ENCODE measurements at regions of chr1 and their contacts with region 1.

Region 1: GRCh38 chr1:12448746-12449177 is 169.2 kb downstream of the DHRS3 start:
- DNase-seq: no peak
- ATAC-seq: no peak
- H3K4me3 Mint-ChIP-seq: no peak overlapping the region
- H3K27ac Mint-ChIP-seq: no peak overlapping the region
- H3K4me1 Mint-ChIP-seq: peaks cover 18% of the 10 kb centered on the region
- H3K27me3 Mint-ChIP-seq: no peaks in the 10 kb centered on the region
- CTCF ChIP-seq: no peak

Region 2: GRCh38 chr1:12434174-12434573 is 14.6 kb before region 1 on chr1:
- CTCF ChIA-PET with region 1: no interaction called
- POLR2A ChIA-PET with region 1: no interaction called
- intact Hi-C with region 1: loop called (anchors 2 kb)
- DNase-seq: no peak
- ATAC-seq: no peak
- H3K4me3 Mint-ChIP-seq: no peak overlapping the region
- H3K27ac Mint-ChIP-seq: peak overlapping the region; percentile 56
- H3K4me1 Mint-ChIP-seq: peaks cover 56% of the 10 kb centered on the region
- H3K27me3 Mint-ChIP-seq: no peaks in the 10 kb centered on the region
- CTCF ChIP-seq: no peak

Region 3: DNA sequence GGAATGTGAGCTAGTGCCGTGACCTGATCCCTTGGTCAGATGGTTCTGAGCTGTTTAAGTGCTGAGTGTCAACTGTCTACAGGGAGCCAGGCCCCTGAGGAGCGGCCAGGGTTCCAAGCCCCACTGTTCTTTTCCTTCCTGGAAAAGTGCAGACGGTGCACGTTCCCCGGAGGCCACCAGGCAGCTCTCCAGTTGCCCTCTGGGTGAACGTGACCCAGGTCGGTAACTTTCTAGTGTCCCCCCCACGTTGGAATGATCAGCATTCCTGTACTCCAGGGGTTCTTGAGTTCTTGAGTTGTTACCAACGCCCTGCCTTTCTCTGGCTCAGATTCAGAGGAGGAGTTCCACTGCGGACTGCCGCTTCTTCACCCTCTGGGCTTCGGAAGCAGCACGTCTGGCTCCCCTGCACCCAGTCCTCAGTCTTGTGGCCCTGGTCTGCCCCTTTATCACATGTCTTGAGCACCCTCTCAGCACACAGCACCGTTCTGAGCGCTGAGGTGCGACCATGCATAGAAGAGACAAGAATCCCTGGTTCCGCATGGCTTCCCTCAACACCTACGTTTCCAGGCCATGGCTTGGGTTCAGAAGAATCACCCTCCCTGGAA is 37.7 kb after region 1 on chr1:
- CTCF ChIA-PET with region 1: no interaction called
- POLR2A ChIA-PET with region 1: no interaction called
- intact Hi-C with region 1: no loop called
- DNase-seq: no peak
- ATAC-seq: no peak
- H3K4me3 Mint-ChIP-seq: no peak overlapping the region
- H3K27ac Mint-ChIP-seq: no peak overlapping the region
- H3K4me1 Mint-ChIP-seq: peaks cover 4% of the 10 kb centered on the region
- H3K27me3 Mint-ChIP-seq: no peaks in the 10 kb centered on the region
- CTCF ChIP-seq: no peak

Region 4: GRCh38 chr1:12621346-12622335 is 172.9 kb after region 1 on chr1:
- CTCF ChIA-PET with region 1: no interaction called
- POLR2A ChIA-PET with region 1: no interaction called
- intact Hi-C with region 1: no loop called
- DNase-seq: no peak
- ATAC-seq: no peak
- H3K4me3 Mint-ChIP-seq: no peak overlapping the region
- H3K27ac Mint-ChIP-seq: no peak overlapping the region
- H3K4me1 Mint-ChIP-seq: peaks cover 32% of the 10 kb centered on the region
- H3K27me3 Mint-ChIP-seq: peaks cover 34% of the 10 kb centered on the region
- CTCF ChIP-seq: no peak